Activated naive CD4-positive, alpha-beta T cell treated with anti-CD3 and anti-CD28 coated beads, Interleukin-2, amount 10 ng/mL, durations not matched to agents 7 days and 5 days (primary cell): ENCODE measurements at regions of chr11 and their contacts with region 1.

Region 1: DNA sequence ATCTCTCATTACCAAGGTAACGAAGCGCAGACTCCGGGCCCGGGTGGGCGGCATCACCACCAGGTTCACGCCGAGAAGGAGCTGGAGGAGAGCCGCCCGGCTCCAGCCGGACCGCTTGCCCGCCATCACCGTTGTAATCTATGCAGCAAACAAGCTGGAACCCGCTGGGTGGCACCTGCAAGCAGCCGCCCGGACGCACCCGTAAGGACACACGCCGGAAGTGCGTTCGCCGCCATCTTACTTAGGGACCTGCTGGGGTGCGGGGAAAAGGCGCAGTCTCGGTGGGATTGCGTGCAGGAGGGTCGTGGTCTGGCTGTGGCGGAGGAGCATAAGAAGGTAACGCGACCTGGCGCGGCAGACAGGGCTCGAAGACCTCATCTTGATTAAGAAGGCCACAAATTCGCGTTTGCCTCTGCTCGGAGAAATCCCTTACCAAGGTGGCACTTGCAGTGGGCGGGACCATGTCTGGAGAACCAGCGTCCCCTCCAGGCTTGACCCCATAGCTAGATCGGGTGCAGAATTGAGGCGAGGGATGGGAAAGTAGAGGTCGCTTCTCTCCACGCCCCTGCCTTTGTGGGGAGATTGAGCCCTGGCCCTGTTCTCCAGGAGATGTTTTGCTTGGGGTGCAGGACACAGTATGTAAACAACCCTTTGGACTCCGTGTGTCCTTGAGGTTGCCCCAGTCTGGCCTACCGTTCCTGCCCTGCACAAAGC is at the start of gene ACP2:
- DNase-seq: peak; percentile 91
- H3K4me3 Mint-ChIP-seq: peak within 1 kb of the TSS; percentile 99
- H3K27ac Mint-ChIP-seq: peak within 1 kb of the TSS; percentile 97
- H3K4me1 Mint-ChIP-seq: peaks cover 32% of the 10 kb centered on the region
- H3K27me3 Mint-ChIP-seq: no peaks in the 10 kb centered on the region

Region 2: GRCh38 chr11:47233989-47234668 is 14.7 kb before region 1 on chr11:
- CTCF ChIA-PET with region 1: interaction called, 15 read pairs
- DNase-seq: peak; percentile 45
- H3K4me3 Mint-ChIP-seq: no peak overlapping the region
- H3K27ac Mint-ChIP-seq: peak overlapping the region; percentile 91
- H3K4me1 Mint-ChIP-seq: peaks cover 31% of the 10 kb centered on the region
- H3K27me3 Mint-ChIP-seq: no peaks in the 10 kb centered on the region

Region 3: GRCh38 chr11:47269002-47269828 is 20.4 kb after region 1 on chr11:
- CTCF ChIA-PET with region 1: interaction called, 12 read pairs
- DNase-seq: peak; percentile 90
- H3K4me3 Mint-ChIP-seq: peak overlapping the region; percentile 84
- H3K27ac Mint-ChIP-seq: peak overlapping the region; percentile 99
- H3K4me1 Mint-ChIP-seq: peaks cover 68% of the 10 kb centered on the region
- H3K27me3 Mint-ChIP-seq: no peaks in the 10 kb centered on the region

Region 4: GRCh38 chr11:47296045-47296444 is 47.2 kb after region 1 on chr11:
- CTCF ChIA-PET with region 1: no interaction called
- DNase-seq: no peak
- H3K4me3 Mint-ChIP-seq: no peak overlapping the region
- H3K27ac Mint-ChIP-seq: no peak overlapping the region
- H3K4me1 Mint-ChIP-seq: no peaks in the 10 kb centered on the region
- H3K27me3 Mint-ChIP-seq: no peaks in the 10 kb centered on the region